Activated T-helper 1 cell treated with anti-CD3 and anti-CD28 coated beads, Interleukin-12 subunit alpha, Interleukin-12 subunit beta, Interleukin-2, Interleukin-4 antibody, amounts not matched to agents 30 ng/mL and 10 ng/mL and 1 ng/mL, durations not matched to agents 14 hours and 24 hours and 36 hours (primary cell): ENCODE measurements at regions of chr9 and their contacts with region 1.

Region 1: DNA sequence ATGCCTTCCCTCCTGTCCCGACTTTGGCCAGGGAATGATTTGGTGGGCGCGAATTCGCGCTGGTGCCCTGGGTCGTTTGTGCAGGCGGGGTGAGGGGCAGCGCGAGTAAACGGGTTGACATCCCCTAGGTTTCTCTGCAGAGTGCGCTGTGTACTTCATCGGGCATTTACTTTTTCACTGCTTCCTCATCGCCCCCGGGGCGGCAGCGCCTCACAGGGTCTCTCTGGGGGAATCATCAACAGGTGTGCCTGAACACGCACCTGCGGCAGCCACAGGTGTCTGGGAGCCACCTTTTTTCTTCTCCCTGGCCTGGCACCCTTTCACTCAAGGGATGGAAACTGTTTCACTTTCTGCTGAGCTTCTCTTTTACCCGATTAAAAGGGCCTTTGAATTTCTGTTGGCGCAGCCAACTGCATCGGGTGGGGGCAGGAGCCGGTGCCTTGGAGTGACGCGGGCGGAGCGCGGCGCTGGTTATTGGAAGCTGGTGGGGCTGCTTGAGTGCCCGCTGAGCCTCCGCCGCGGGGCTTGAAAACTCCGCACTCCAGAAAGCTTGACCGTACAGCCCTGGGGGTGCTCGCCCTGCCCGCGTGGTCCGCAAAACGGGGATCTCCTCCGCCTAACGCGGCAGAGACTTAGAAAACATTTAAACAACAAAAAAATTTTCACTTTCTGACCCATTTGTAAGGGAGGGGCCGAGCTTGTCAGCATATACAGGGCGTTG is 52.1 kb upstream of the TJP2 start:
- DNase-seq: peak; percentile 31
- H3K4me3 Mint-ChIP-seq: peak overlapping the region; percentile 87
- H3K27ac Mint-ChIP-seq: no peak overlapping the region
- H3K4me1 Mint-ChIP-seq: peaks cover 15% of the 10 kb centered on the region
- H3K27me3 Mint-ChIP-seq: peaks cover 12% of the 10 kb centered on the region

Region 2: DNA sequence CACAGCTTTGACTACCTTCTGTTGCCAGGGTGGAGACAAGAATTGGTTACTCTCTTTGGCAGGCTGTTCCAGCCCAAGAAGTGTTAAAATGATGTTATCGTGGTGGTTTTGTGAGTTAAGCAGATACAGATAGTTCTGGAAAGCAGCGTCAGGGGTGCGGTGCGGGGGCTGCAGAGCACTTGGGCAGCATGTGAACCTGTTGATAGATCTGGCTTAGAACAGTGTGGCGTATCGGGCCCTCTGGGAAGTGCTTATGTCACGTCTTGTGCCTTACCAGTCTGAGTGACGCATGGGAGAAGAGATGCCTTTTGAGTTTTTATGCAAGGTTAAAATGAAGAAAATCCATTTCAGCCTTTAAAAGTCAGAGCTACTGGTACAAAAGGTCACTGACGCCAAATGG is 260.6 kb before region 1 on chr9:
- intact Hi-C with region 1: no loop called
- DNase-seq: no peak
- H3K4me3 Mint-ChIP-seq: no peak overlapping the region
- H3K27ac Mint-ChIP-seq: no peak overlapping the region
- H3K4me1 Mint-ChIP-seq: no peaks in the 10 kb centered on the region
- H3K27me3 Mint-ChIP-seq: peaks cover 5% of the 10 kb centered on the region

Region 3: GRCh38 chr9:69035438-69036308 is 86.3 kb before region 1 on chr9 and contains the start of gene FXN:
- intact Hi-C with region 1: loop called (anchors 5 kb)
- DNase-seq: peak; percentile 78
- H3K4me3 Mint-ChIP-seq: peak within 1 kb of the TSS; percentile 88
- H3K27ac Mint-ChIP-seq: peak within 1 kb of the TSS; percentile 78
- H3K4me1 Mint-ChIP-seq: peaks cover 15% of the 10 kb centered on the region
- H3K27me3 Mint-ChIP-seq: no peaks in the 10 kb centered on the region
- total RNA-seq, gene FXN: 43.6 and 47.7 TPM in 2 replicates

Region 4: GRCh38 chr9:69174616-69175463 is 52.9 kb after region 1 on chr9:
- intact Hi-C with region 1: loop called (anchors 5 kb)
- DNase-seq: peak; percentile 21
- H3K4me3 Mint-ChIP-seq: peak overlapping the region; percentile 82
- H3K27ac Mint-ChIP-seq: peak overlapping the region; percentile 69
- H3K4me1 Mint-ChIP-seq: peaks cover 70% of the 10 kb centered on the region
- H3K27me3 Mint-ChIP-seq: peaks cover 18% of the 10 kb centered on the region